Sigmoid colon (tissue), 7 donors: ENCODE measurements at regions of chr1 and their contacts with region 1.

Region 1: DNA sequence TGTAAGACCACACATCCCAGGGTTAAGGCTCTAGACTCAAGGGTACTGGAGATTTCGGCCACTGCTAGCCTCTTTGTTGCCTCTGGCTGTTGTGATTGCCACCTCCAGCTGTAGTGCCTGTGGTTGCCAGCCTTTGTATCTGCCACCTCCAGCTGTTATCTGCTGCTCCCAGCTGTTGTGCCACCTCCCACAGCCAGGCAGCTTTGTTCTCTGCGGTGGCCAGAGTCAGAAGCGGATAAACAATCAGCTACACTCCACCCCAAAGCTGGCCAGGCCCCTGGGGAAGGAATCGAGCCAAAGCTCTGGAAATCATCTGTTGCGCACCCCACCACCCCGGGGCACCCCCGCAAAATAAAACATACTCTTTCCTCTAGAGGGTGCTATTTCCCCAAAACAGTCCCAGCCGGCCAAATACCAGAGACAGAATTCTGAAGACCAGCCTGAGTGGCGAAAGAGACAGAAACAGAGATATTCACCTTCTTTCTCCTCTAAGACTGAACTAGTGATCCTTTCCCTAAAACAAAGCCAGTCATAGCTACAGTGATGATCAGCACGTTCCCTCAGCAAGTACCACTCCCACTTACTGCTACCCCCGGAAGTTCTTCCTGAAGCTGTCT is 14.8 kb upstream of the PIGM start:
- DNase-seq: peak; percentile 90
- H3K4me3 ChIP-seq: peak overlapping the region in 1 of 4 donors; percentile 7
- H3K27ac ChIP-seq: peak overlapping the region in 3 of 4 donors; percentile 13 to 42 (median 37)
- H3K4me1 ChIP-seq: peaks cover 0 to 26% (median 15%) of the 10 kb centered on the region in 4 donors
- H3K27me3 ChIP-seq: no peaks in the 10 kb centered on the region
- CTCF ChIP-seq: peak; percentile 69 to 77 (median 72)
- EP300 ChIP-seq: no peak
- POLR2A ChIP-seq: no peak

Region 2: DNA sequence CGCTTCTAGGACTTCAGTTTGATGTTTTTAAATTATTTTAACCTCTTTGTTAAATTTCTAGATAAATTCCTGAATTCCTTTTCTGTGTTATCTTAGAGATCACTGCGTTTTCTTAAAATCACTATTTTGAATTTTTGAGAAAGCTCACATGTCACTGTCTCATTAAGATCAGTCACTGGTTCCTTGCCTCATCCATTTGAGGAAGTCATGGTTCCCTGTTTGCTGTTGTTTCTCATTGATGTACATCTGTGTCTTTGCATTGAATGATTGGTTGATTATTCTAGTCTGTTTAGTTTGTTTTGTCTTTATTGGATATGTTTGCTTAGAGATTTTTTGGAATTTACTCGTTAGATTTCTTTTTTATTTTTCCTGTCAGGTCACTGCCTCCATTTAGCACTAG is 382.4 kb before region 1 on chr1:
- intact Hi-C with region 1: no loop called
- DNase-seq: no peak
- H3K4me3 ChIP-seq: no peak overlapping the region
- H3K27ac ChIP-seq: no peak overlapping the region
- H3K4me1 ChIP-seq: no peaks in the 10 kb centered on the region
- H3K27me3 ChIP-seq: no peaks in the 10 kb centered on the region
- CTCF ChIP-seq: no peak
- EP300 ChIP-seq: no peak
- POLR2A ChIP-seq: no peak

Region 3: GRCh38 chr1:159991513-159991912 is 55.1 kb before region 1 on chr1:
- intact Hi-C with region 1: no loop called
- DNase-seq: no peak
- H3K4me3 ChIP-seq: no peak overlapping the region
- H3K27ac ChIP-seq: no peak overlapping the region
- H3K4me1 ChIP-seq: peaks cover 0 to 28% (median 12%) of the 10 kb centered on the region in 4 donors
- H3K27me3 ChIP-seq: no peaks in the 10 kb centered on the region
- CTCF ChIP-seq: no peak
- EP300 ChIP-seq: no peak
- POLR2A ChIP-seq: no peak

Region 4: DNA sequence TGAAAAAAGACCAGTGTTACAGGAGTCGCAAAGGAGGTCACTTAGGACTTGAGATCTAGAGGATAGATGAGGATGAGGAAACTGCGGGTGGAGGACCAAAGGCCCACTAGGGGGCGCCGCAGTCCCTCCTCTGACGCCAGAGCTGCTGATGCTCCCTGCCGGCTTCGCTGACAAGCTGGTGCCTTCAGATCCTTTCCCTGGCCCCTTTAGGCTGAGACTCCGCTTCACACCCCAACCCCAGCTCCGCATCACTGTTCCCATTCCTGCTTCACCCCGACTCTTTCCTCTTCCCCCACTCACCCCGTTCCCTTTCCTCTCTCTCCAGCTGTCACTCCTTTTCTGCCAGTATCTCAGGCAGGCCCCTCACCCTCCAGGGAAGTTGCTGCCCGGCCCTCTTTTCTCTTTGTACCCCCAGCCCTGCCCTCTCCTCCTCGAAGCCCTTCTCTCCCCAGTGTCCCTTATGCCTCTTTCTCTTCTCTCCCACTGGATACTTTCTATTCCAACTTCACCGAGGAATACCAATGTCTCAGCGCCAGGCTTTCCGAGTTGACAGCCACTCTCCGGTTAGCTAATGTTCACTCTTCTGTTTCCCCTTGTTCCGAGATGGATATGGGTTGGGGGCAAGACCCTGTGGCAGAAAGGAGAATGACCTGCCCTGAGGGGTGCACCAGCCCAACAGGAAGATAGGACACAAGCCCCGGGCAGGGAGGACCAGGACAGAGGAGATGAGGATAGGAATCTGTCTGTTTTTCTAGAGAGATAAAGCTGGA is 39.3 kb after region 1 on chr1:
- intact Hi-C with region 1: loop called (anchors 2 kb)
- DNase-seq: peak; percentile 92
- H3K4me3 ChIP-seq: no peak overlapping the region
- H3K27ac ChIP-seq: peak overlapping the region; percentile 15 to 55 (median 22)
- H3K4me1 ChIP-seq: peaks cover 0 to 12% (median 9%) of the 10 kb centered on the region in 4 donors
- H3K27me3 ChIP-seq: peaks cover 0 to 33% (median 9%) of the 10 kb centered on the region in 3 donors
- CTCF ChIP-seq: peak; percentile 65 to 92 (median 68)
- EP300 ChIP-seq: no peak
- POLR2A ChIP-seq: no peak

Region 5: GRCh38 chr1:160398823-160399222 is 352.2 kb after region 1 on chr1:
- intact Hi-C with region 1: no loop called
- DNase-seq: no peak
- H3K4me3 ChIP-seq: no peak overlapping the region
- H3K27ac ChIP-seq: no peak overlapping the region
- H3K4me1 ChIP-seq: peaks cover 0 to 22% (median 13%) of the 10 kb centered on the region in 4 donors
- H3K27me3 ChIP-seq: no peaks in the 10 kb centered on the region
- CTCF ChIP-seq: no peak
- EP300 ChIP-seq: no peak
- POLR2A ChIP-seq: no peak